PC-9 (cell line): ENCODE measurements at regions of chr5 and their contacts with region 1.

Region 1: GRCh38 chr5:13470263-13470662 is 474.2 kb downstream of the DNAH5 start:
- DNase-seq: no peak
- H3K4me3 ChIP-seq: no peak overlapping the region
- H3K27ac ChIP-seq: no peak overlapping the region
- H3K4me1 ChIP-seq: no peaks in the 10 kb centered on the region
- H3K27me3 ChIP-seq: no peaks in the 10 kb centered on the region
- CTCF ChIP-seq: no peak

Region 2: DNA sequence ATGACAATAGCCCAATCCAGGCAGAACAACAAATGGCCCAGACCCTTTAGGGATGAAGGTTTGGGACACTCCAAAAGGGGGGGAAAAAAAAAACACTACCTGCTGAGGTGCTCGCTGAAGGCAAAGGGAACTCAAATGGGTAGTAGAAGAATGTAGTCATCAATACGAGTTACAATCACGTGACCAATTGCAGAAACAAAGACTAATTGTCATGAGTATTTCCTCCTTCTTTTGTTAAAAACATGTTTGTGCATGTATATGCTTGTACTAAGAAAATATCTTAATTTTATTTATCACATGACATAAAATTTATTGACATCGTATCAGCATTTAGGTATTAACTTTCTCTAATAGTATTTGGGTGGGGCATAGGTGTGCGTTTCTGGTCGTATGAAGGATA is 269.2 kb before region 1 on chr5:
- CTCF ChIA-PET with region 1: interaction called, 10 read pairs
- POLR2A ChIA-PET with region 1: no interaction called
- intact Hi-C with region 1: no loop called
- DNase-seq: no peak
- H3K4me3 ChIP-seq: no peak overlapping the region
- H3K27ac ChIP-seq: no peak overlapping the region
- H3K4me1 ChIP-seq: no peaks in the 10 kb centered on the region
- H3K27me3 ChIP-seq: no peaks in the 10 kb centered on the region
- CTCF ChIP-seq: no peak